PC-9 (cell line): ENCODE measurements at regions of chr14 and their contacts with region 1.

Region 1: DNA sequence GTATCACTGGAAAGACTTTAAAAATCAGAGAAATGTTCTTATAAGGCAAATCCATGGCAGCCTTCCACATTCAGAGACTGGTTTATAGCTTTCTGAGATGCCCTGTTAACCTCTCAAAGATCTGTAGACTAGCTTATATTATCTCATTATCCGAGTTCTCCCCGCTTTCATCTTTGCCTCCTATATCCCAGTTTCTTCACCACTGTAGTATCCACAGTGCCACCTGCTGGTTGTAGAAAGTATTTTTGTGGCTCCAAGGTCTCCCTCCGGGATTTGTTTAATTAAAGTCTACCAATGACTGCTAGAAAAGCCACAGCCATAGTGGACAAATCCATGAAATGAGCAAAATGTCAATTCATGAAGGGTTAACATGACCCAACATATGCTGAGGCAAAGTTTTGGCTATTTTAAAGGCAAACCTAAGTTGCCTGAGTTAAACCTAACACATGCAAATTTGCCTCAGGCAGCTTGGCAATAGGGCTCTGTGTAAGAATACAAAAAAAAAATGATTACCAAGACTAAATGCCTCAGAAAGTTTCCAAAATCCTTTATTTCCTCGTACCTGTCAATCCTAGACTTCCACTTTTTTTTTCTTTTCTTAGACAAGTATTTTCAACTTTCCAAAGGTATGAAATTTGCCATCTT is 218.8 kb upstream of the BMP4 start:
- DNase-seq: peak; percentile 37 to 71
- H3K4me3 ChIP-seq: no peak overlapping the region
- H3K27ac ChIP-seq: no peak overlapping the region
- H3K4me1 ChIP-seq: peaks cover 10% of the 10 kb centered on the region
- H3K27me3 ChIP-seq: no peaks in the 10 kb centered on the region
- CTCF ChIP-seq: peak; percentile 97

Region 2: GRCh38 chr14:53539489-53540126 is 635.8 kb before region 1 on chr14:
- CTCF ChIA-PET with region 1: no interaction called
- POLR2A ChIA-PET with region 1: interaction called, 3 read pairs
- intact Hi-C with region 1: loop called (anchors 1 kb)
- DNase-seq: peak; percentile 45 to 74
- H3K4me3 ChIP-seq: no peak overlapping the region
- H3K27ac ChIP-seq: no peak overlapping the region
- H3K4me1 ChIP-seq: no peaks in the 10 kb centered on the region
- H3K27me3 ChIP-seq: no peaks in the 10 kb centered on the region
- CTCF ChIP-seq: peak; percentile 88

Region 3: DNA sequence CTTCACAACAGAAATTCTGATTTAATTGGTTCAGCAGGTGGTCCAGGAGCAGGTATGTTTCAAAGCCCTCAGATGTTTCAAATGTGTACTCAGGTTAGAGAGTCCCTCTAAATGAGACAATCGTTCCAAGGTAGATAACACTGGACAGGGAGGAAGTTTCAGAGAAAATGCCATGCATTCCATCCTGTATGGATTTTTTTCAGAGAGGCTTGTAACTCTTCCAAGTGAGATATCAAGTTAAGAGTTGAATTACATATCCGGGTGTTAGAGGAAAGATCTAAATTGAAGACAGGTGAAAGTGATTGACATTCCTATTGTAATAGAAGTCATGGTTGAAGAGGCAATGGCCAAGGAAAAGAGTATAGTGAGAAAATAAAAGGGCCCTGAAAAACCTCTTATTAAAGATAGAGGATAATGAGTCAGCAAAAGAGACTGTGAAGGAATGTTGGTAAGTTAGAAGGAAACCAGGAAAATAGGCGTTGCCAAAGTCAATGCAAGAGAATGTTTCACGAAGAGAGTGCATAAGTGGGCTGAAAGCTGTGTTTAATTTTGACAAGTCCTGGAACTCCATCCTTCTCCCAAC is 324.6 kb before region 1 on chr14:
- CTCF ChIA-PET with region 1: no interaction called
- POLR2A ChIA-PET with region 1: interaction called, 3 read pairs
- intact Hi-C with region 1: loop called (anchors 5 kb)
- DNase-seq: peak; percentile 47 to 96
- H3K4me3 ChIP-seq: peak overlapping the region; percentile 26
- H3K27ac ChIP-seq: peak overlapping the region; percentile 88
- H3K4me1 ChIP-seq: peaks cover 38% of the 10 kb centered on the region
- H3K27me3 ChIP-seq: no peaks in the 10 kb centered on the region
- CTCF ChIP-seq: no peak

Region 4: DNA sequence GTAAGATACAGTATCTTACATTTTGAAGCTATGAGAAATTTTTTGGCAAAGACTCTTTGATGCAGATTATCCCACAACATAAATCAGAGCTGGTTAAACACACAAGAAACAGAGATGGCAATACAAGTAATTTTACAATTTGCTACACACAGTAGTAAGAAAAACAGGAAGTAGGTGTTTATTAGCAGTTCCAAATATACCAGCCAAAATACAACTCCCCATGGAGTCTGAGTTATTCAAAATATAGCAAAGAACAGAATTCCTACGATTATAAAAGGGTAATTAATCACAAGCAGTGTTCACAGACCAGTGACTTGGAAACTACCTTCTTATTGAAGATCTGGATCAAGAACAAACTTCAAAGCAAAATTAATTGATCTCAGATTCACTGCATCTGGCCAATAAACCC is 302.7 kb before region 1 on chr14:
- CTCF ChIA-PET with region 1: no interaction called
- POLR2A ChIA-PET with region 1: no interaction called
- intact Hi-C with region 1: no loop called
- DNase-seq: no peak
- H3K4me3 ChIP-seq: no peak overlapping the region
- H3K27ac ChIP-seq: no peak overlapping the region
- H3K4me1 ChIP-seq: no peaks in the 10 kb centered on the region
- H3K27me3 ChIP-seq: no peaks in the 10 kb centered on the region
- CTCF ChIP-seq: no peak

Region 5: GRCh38 chr14:54025661-54026060 is 149.8 kb before region 1 on chr14:
- CTCF ChIA-PET with region 1: no interaction called
- POLR2A ChIA-PET with region 1: no interaction called
- intact Hi-C with region 1: loop called (anchors 5 kb)
- DNase-seq: no peak
- H3K4me3 ChIP-seq: no peak overlapping the region
- H3K27ac ChIP-seq: no peak overlapping the region
- H3K4me1 ChIP-seq: no peaks in the 10 kb centered on the region
- H3K27me3 ChIP-seq: no peaks in the 10 kb centered on the region
- CTCF ChIP-seq: peak; percentile 60

Region 6: DNA sequence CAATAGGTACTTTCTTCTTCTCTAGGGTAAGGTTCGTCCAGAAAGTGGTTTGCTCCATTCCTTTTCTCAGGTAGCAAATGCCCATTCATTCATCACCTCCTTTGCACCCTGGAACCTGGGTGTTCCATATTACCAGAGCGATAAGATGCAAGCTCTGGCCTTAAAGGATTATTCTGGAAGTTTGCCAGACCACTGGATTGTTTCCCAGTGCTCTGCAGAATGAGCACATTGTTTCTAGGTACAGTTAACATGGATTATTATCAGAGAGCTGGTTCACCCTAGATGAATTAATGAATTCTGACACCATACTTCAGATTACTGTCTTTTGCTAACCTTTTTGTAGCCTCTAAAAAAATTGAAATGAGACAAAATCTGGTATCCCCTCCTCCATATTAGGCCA is 47.9 kb before region 1 on chr14:
- CTCF ChIA-PET with region 1: interaction called, 20 read pairs
- POLR2A ChIA-PET with region 1: no interaction called
- intact Hi-C with region 1: no loop called
- DNase-seq: no peak
- H3K4me3 ChIP-seq: no peak overlapping the region
- H3K27ac ChIP-seq: no peak overlapping the region
- H3K4me1 ChIP-seq: no peaks in the 10 kb centered on the region
- H3K27me3 ChIP-seq: no peaks in the 10 kb centered on the region
- CTCF ChIP-seq: no peak

Region 7: GRCh38 chr14:54329082-54329695 is 153.8 kb after region 1 on chr14:
- CTCF ChIA-PET with region 1: interaction called, 14 read pairs
- POLR2A ChIA-PET with region 1: no interaction called
- intact Hi-C with region 1: loop called (anchors 1 kb)
- DNase-seq: peak; percentile 39 to 47
- H3K4me3 ChIP-seq: no peak overlapping the region
- H3K27ac ChIP-seq: no peak overlapping the region
- H3K4me1 ChIP-seq: no peaks in the 10 kb centered on the region
- H3K27me3 ChIP-seq: no peaks in the 10 kb centered on the region
- CTCF ChIP-seq: peak; percentile 49

Region 8: DNA sequence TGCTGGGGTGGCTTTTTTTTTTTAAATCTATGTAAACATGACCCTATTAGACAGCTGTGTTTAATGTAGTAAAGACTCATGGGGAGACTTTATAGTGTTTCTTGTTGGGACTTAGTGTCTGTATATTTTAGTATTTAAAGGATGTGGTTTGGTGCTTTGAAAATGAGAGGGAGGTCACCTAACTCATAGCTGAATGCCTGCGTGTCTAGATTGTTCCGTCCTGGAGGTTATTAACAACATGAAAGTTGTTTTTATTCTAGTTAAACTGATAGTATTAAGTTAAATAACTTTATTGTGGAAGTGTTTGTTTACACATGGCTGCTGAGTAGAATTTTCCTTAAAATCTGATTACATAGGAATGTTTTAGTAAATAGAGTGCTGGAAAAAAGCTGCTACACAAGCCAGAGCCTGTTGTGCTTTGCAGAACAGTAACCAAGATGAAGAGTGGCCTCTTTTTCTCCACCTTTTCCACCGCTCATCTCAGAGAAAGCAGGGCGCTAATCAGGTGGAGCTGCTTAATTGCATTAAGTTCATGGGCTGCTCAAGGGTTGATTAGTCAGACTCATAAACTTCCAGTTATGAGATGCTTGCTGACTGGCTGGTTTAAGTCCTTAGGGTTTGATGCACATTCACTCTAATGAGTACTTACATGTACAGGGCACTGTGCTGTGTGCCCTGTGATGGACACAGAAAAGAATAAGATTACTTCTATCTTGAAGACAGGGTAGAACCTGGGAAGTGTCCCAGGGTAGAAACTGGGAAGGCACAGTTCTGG is 1158.5 kb after region 1 on chr14:
- CTCF ChIA-PET with region 1: no interaction called
- POLR2A ChIA-PET with region 1: no interaction called
- intact Hi-C with region 1: no loop called
- DNase-seq: no peak
- H3K4me3 ChIP-seq: no peak overlapping the region
- H3K27ac ChIP-seq: no peak overlapping the region
- H3K4me1 ChIP-seq: peaks cover 36% of the 10 kb centered on the region
- H3K27me3 ChIP-seq: no peaks in the 10 kb centered on the region
- CTCF ChIP-seq: no peak